Activated CD4-positive, alpha-beta T cell treated with anti-CD3 and anti-CD28 coated beads, Interleukin-2, amount 10 ng/mL, durations not matched to agents 24 days and 14 days (primary cell): ENCODE measurements at regions of chr6 and their contacts with region 1.

Region 1: DNA sequence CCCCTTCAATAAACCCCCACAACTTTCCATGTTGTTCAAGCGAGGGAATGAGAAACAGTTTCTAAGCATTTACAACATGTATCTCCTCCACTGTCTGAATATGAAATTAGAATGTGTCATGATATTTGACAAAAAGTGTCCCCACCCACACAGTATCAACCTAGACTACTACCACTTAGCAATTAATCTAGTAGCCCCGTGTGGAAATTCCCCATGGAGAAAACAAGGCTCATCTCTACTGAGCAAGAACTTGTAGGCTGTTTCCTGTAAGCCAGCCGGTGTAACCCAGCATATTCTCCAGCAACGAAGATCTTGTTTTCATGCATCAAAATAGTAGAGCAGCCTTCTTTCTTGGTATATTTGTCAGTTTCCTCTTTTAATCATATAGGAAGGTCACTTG is 115.0 kb downstream of the IRF4 start:
- DNase-seq: peak; percentile 77
- H3K4me3 Mint-ChIP-seq: peak overlapping the region; percentile 75
- H3K27ac Mint-ChIP-seq: peak overlapping the region; percentile 98
- H3K4me1 Mint-ChIP-seq: peaks cover 90% of the 10 kb centered on the region
- H3K27me3 Mint-ChIP-seq: no peaks in the 10 kb centered on the region

Region 2: DNA sequence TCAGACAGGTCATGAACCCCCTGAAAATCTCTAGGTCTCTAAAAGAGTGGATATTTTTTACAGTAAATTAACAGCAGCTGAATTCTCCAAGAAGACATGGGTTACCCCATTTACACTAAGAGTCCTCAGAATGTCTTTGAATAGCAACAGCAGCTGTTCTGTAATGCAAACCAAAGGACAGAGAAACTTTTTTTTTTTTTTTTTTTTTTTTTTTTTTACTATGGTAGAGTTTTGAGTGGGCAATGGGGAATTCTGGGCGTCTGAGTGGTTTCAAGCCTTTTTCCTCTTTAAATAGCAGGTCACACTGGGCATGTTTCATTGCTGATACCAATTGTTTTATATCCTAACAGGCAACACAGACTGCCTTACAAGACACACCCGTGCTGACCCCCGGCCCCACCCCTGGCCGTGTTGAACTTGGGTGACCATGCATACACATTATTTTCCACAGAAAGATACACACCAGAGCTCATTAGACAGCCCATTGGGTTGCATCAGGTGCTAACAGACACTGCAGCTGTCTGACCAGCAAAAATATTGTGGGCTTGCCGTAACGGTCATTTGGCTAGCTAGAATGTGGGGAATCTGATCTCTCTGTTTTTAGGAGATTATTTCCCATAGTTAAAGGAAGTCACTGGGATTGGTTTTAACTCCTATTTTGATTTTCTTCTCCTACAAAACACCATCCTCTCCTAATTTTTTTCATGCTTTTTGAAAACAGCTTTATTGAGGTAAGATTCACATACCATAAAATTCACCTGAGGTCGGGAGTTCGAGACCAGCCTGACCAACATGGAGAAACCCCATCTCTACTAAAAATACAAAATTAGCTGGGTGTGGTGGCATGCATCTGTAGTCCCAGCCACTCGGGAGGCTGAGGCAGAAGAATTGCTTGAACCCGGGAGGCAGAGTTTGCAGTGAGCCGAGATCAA is 141.6 kb before region 1 on chr6:
- intact Hi-C with region 1: no loop called
- DNase-seq: no peak
- H3K4me3 Mint-ChIP-seq: no peak overlapping the region
- H3K27ac Mint-ChIP-seq: no peak overlapping the region
- H3K4me1 Mint-ChIP-seq: no peaks in the 10 kb centered on the region
- H3K27me3 Mint-ChIP-seq: peaks cover 8% of the 10 kb centered on the region

Region 3: DNA sequence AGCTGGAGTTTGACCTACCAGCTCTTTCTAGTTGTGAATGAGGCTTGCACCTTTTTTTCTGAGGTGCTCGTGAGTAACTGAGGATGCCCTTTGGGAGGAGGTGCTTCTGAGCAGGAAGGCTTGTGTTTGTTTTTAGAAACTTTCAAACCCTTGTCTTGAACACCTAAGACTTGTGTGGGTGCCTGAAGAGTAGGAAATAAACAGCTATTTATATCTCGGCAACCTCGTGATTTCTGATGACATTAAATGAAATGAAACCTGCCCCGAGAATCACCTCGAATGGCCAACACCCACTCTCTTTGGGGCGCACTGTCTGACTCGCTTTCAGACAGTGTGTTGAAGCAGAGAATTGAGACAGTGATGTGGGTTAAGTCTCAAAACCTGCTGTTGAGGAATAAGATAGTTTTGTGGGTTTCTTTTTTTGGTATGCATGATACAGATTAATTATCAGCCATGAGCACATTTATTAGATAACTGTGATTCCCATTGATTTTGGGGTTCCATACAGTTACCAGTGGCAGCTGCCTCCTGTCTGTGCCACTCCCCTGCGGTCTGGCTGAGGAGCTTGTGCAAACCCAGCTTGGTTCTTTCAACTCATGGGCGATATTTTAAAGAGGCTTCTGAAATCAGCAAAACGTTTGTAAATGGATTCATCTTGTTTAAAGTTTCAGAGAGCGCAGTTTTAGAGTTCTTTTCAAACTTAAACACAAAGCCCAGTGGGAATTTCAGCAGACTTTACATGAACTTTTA is 106.5 kb before region 1 on chr6:
- intact Hi-C with region 1: loop called (anchors 1 kb)
- DNase-seq: peak; percentile 87
- H3K4me3 Mint-ChIP-seq: peak overlapping the region; percentile 80
- H3K27ac Mint-ChIP-seq: peak overlapping the region; percentile 87
- H3K4me1 Mint-ChIP-seq: peaks cover 88% of the 10 kb centered on the region
- H3K27me3 Mint-ChIP-seq: no peaks in the 10 kb centered on the region

Region 4: GRCh38 chr6:431986-432385 is 74.5 kb before region 1 on chr6:
- intact Hi-C with region 1: loop called (anchors 1 kb)
- DNase-seq: peak; percentile 90
- H3K4me3 Mint-ChIP-seq: peak overlapping the region; percentile 14
- H3K27ac Mint-ChIP-seq: peak overlapping the region; percentile 67
- H3K4me1 Mint-ChIP-seq: peaks cover 72% of the 10 kb centered on the region
- H3K27me3 Mint-ChIP-seq: no peaks in the 10 kb centered on the region

Region 5: DNA sequence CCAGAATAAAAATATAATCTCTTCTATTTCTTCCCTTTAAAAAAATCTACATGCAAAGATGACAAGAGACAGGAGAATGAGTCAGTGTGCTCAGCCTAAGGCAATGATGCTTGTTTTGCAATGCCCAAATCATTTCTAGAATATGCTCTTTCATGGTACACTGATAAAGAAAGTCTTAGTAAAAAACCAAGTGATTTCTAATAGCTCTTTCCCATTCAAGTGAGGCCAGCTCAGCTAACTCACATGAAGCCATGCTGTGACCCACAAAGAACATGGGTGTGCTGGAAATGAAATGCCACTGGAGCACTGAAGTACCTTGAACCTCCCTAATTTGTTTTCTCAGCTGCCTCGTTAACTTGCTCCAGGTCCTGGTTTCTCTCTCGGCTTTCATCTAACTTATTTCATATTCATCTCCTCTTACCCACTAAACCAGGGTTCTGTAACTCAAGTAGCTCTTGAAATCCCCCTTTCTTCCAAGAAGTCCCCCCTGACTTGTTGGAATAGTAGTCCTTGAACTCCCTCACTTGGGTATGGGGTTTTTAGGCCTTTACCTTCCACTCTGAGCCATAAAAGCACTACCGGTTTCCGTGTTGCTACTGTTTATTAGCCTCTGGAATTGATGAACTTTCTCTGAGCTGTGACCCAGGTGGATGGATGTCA is 22.3 kb before region 1 on chr6:
- intact Hi-C with region 1: loop called (anchors 1 kb)
- DNase-seq: peak; percentile 67
- H3K4me3 Mint-ChIP-seq: peak overlapping the region; percentile 51
- H3K27ac Mint-ChIP-seq: peak overlapping the region; percentile 98
- H3K4me1 Mint-ChIP-seq: peaks cover 67% of the 10 kb centered on the region
- H3K27me3 Mint-ChIP-seq: no peaks in the 10 kb centered on the region

Region 6: GRCh38 chr6:524803-525202 is 18.3 kb after region 1 on chr6:
- intact Hi-C with region 1: loop called (anchors 2 kb)
- DNase-seq: peak; percentile 76
- H3K4me3 Mint-ChIP-seq: no peak overlapping the region
- H3K27ac Mint-ChIP-seq: peak overlapping the region; percentile 71
- H3K4me1 Mint-ChIP-seq: peaks cover 18% of the 10 kb centered on the region
- H3K27me3 Mint-ChIP-seq: no peaks in the 10 kb centered on the region

Region 7: GRCh38 chr6:537114-537513 is 30.6 kb after region 1 on chr6:
- intact Hi-C with region 1: no loop called
- DNase-seq: peak; percentile 27
- H3K4me3 Mint-ChIP-seq: no peak overlapping the region
- H3K27ac Mint-ChIP-seq: no peak overlapping the region
- H3K4me1 Mint-ChIP-seq: no peaks in the 10 kb centered on the region
- H3K27me3 Mint-ChIP-seq: no peaks in the 10 kb centered on the region